ENCODE measurements at regions of chr19 and their contacts with region 1.

Region 1: GRCh38 chr19:36139473-36140303 is at the start of gene CAPNS1:
- DNase-seq: peak; percentile 95 to 98 (median 96)
- ATAC-seq: peak; percentile 87
- H3K4me3 ChIP-seq: peak within 1 kb of the TSS; percentile 95
- H3K27ac ChIP-seq: peak within 1 kb of the TSS; percentile 99
- H3K4me1 ChIP-seq: peaks cover 13 to 37% of the 10 kb centered on the region in 2 experiments
- H3K27me3 ChIP-seq: no peaks in the 10 kb centered on the region
- CTCF ChIP-seq: peak in 2 of 3 experiments; percentile 17 to 35; a peak in 3 of 6 replicates
- EP300 ChIP-seq: no peak; the same call in 1 of the 2 replicates
- POLR2A ChIP-seq: peak; percentile 92
- RAD21 ChIP-seq: no peak
- polyA plus RNA-seq, gene CAPNS1: 77.9 to 115 TPM

Region 2: GRCh38 chr19:36128392-36128736 is 11.3 kb before region 1 on chr19:
- CTCF ChIA-PET with region 1: no interaction called
- POLR2A ChIA-PET with region 1: interaction called, 9 read pairs
- in situ Hi-C with region 1: no loop called
- intact Hi-C with region 1: loop called (anchors 1 kb)
- DNase-seq: peak in 3 of 4 experiments; percentile 29 to 33 (median 29)
- ATAC-seq: peak; percentile 9
- H3K4me3 ChIP-seq: peak overlapping the region; percentile 46
- H3K27ac ChIP-seq: peak overlapping the region; percentile 64
- H3K4me1 ChIP-seq: peaks cover 0 to 15% of the 10 kb centered on the region in 2 experiments; a peak in 2 of 5 replicates
- H3K27me3 ChIP-seq: no peaks in the 10 kb centered on the region
- CTCF ChIP-seq: no peak
- EP300 ChIP-seq: no peak
- POLR2A ChIP-seq: no peak
- RAD21 ChIP-seq: no peak